GM23248 (cell line): ENCODE measurements at regions of chr2 and their contacts with region 1.

Region 1: DNA sequence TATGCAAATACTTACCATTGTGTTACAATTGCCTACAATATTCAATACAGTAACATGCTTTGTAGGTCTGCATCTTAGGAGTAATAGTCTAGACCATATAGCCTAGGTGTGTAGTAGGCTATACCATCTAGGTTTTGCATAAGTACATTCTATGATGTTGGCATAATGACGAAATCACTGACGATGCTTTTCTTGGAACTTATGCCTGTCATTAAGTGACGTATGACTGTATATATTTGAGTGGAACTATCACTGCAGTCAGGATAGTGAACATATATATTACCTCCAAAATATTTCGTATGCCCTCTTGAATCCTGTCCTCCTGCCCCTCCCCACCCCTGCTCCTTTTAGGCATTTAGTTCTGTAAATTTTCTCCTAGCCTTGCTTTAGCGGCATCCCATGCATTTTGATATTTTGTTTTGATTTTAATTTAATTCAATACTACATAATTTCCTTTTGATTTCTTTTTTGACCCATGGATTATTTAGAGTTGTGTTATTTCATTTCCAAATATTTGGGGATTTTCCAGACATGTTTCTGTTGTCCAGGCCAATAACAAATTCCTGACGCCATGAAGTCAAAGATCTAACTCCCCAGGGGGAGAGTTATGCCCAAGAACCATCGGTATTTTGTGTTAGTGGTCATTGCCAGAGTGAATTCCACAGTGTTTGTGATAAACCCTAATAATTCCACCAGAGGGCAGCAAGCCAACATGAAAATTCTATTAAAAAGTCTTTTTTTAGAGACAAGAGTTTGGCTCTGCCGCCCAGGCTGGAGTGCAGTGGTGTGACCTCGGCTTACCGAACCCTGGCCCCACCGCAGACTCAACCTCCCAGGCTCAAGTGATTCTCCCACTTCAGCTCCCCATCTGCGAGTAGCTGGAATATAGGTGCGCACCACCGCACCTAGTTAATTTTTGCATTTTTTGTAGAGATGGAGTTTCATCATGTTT is 24.2 kb upstream of the CASP8 start:
- DNase-seq: peak; percentile 87
- H3K4me3 ChIP-seq: peak overlapping the region; percentile 38
- H3K27ac ChIP-seq: peak overlapping the region; percentile 14; the same call in 1 of the 2 replicates
- H3K4me1 ChIP-seq: peaks cover 46% of the 10 kb centered on the region
- H3K27me3 ChIP-seq: no peaks in the 10 kb centered on the region

Region 2: GRCh38 chr2:201363857-201364560 is 127.9 kb after region 1 on chr2:
- in situ Hi-C with region 1: loop called (anchors 5 kb)
- DNase-seq: peak; percentile 78
- H3K4me3 ChIP-seq: no peak overlapping the region
- H3K27ac ChIP-seq: no peak overlapping the region
- H3K4me1 ChIP-seq: peaks cover 8% of the 10 kb centered on the region
- H3K27me3 ChIP-seq: no peaks in the 10 kb centered on the region

Region 3: GRCh38 chr2:201904538-201905420 is 668.6 kb after region 1 on chr2:
- in situ Hi-C with region 1: no loop called
- DNase-seq: peak; percentile 59
- H3K4me3 ChIP-seq: no peak overlapping the region
- H3K27ac ChIP-seq: no peak overlapping the region
- H3K4me1 ChIP-seq: peaks cover 27% of the 10 kb centered on the region
- H3K27me3 ChIP-seq: no peaks in the 10 kb centered on the region

Region 4: GRCh38 chr2:202510911-202511310 is 1274.8 kb after region 1 on chr2:
- in situ Hi-C with region 1: no loop called
- DNase-seq: peak; percentile 64
- H3K4me3 ChIP-seq: no peak overlapping the region
- H3K27ac ChIP-seq: 0 out of 2 replicates have a peak overlapping the region, but pooled peaks have one; percentile 6
- H3K4me1 ChIP-seq: peaks cover 27% of the 10 kb centered on the region
- H3K27me3 ChIP-seq: no peaks in the 10 kb centered on the region